ENCODE measurements at regions of chr14 and their contacts with region 1.

Region 1: GRCh38 chr14:20413045-20413799 is at the start of gene TEP1:
- DNase-seq: no peak
- ATAC-seq: peak; percentile 94
- H3K4me3 ChIP-seq: peak within 1 kb of the TSS; percentile 99
- H3K27ac ChIP-seq: peak within 1 kb of the TSS; percentile 94
- H3K4me1 ChIP-seq: peaks cover 4% of the 10 kb centered on the region
- H3K27me3 ChIP-seq: no peaks in the 10 kb centered on the region
- CTCF ChIP-seq: no peak
- EP300 ChIP-seq: no peak
- POLR2A ChIP-seq: peak; percentile 71
- RAD21 ChIP-seq: no peak
- polyA plus RNA-seq, gene TEP1: 3.3 to 6.4 TPM

Region 2: DNA sequence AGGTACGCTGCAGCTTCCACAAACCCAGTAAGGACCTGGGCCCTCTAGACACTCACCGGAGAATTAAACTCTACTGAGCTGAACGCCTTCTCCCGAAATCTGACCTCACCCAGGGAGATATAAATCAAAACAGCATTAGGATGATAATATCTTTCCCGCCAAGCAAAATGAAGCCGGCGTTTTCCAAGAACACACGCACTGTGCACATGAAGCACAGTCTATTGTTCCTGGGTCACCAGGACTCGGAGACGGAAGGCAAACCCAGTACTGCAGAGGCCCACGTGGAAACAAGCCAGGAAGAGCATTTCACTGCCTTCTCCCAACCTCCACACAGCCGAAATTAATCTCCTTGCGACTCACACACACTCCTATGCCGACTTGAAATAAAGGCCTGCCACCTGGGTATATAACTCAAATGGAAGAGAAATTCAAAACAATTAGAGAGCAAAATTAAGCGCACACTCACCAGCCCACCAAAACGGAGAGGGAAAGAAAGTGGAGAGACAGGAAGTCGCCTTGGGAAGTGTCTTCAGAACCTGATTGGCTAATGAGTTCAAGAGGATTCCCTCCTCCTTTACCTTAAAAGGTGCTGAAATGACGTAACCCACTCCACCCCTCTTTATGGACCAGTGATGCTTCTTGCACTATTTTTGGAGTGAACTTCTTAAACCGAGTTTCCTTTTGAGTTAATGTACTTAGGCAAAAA is 80.3 kb before region 1 on chr14 and contains the start of gene CCNB1IP1:
- CTCF ChIA-PET with region 1: interaction called, 91 read pairs
- POLR2A ChIA-PET with region 1: interaction called, 8 read pairs
- RAD21 ChIA-PET with region 1: interaction called, 78 read pairs
- SMC1A ChIA-PET with region 1: interaction called, 56 read pairs
- in situ Hi-C with region 1: no loop called
- intact Hi-C with region 1: no loop called
- DNase-seq: peak; percentile 87
- ATAC-seq: peak; percentile 95
- H3K4me3 ChIP-seq: peak within 1 kb of the TSS; percentile 82
- H3K27ac ChIP-seq: peak within 1 kb of the TSS; percentile 85
- H3K4me1 ChIP-seq: peaks cover 6% of the 10 kb centered on the region; the same call in 1 of the 2 replicates
- H3K27me3 ChIP-seq: no peaks in the 10 kb centered on the region
- CTCF ChIP-seq: no peak
- EP300 ChIP-seq: no peak; a peak in 1 of 4 replicates
- POLR2A ChIP-seq: peak; percentile 56; the same call in 1 of the 2 replicates
- RAD21 ChIP-seq: no peak
- polyA plus RNA-seq, gene CCNB1IP1: 69.2 to 80.6 TPM

Region 3: GRCh38 chr14:20427231-20428009 is 14.2 kb after region 1 on chr14:
- CTCF ChIA-PET with region 1: interaction called, 70 read pairs
- POLR2A ChIA-PET with region 1: interaction called, 6 read pairs
- RAD21 ChIA-PET with region 1: interaction called, 5 read pairs
- SMC1A ChIA-PET with region 1: interaction called, 18 read pairs
- in situ Hi-C with region 1: no loop called
- intact Hi-C with region 1: loop called (anchors 1 kb)
- DNase-seq: peak; percentile 71
- ATAC-seq: peak; percentile 85
- H3K4me3 ChIP-seq: peak overlapping the region; percentile 50; the same call in 1 of the 2 replicates
- H3K27ac ChIP-seq: peak overlapping the region; percentile 89
- H3K4me1 ChIP-seq: peaks cover 18% of the 10 kb centered on the region
- H3K27me3 ChIP-seq: no peaks in the 10 kb centered on the region
- CTCF ChIP-seq: no peak
- EP300 ChIP-seq: peak; percentile 42 to 74; a peak in 2 of 4 replicates
- POLR2A ChIP-seq: no peak
- RAD21 ChIP-seq: no peak

Region 4: GRCh38 chr14:20461274-20462001 is 48.2 kb after region 1 on chr14 and contains the start of gene PIP4P1:
- CTCF ChIA-PET with region 1: interaction called, 48 read pairs
- POLR2A ChIA-PET with region 1: interaction called, 27 read pairs
- RAD21 ChIA-PET with region 1: interaction called, 20 read pairs
- SMC1A ChIA-PET with region 1: interaction called, 27 read pairs
- in situ Hi-C with region 1: no loop called
- intact Hi-C with region 1: no loop called
- DNase-seq: peak; percentile 100
- ATAC-seq: peak; percentile 96
- H3K4me3 ChIP-seq: peak within 1 kb of the TSS; percentile 73
- H3K27ac ChIP-seq: peak within 1 kb of the TSS; percentile 87
- H3K4me1 ChIP-seq: peaks cover 6% of the 10 kb centered on the region
- H3K27me3 ChIP-seq: no peaks in the 10 kb centered on the region
- CTCF ChIP-seq: no peak
- EP300 ChIP-seq: no peak
- POLR2A ChIP-seq: peak; percentile 78
- RAD21 ChIP-seq: no peak
- polyA plus RNA-seq, gene PIP4P1: 19.1 to 41.6 TPM

Region 5: DNA sequence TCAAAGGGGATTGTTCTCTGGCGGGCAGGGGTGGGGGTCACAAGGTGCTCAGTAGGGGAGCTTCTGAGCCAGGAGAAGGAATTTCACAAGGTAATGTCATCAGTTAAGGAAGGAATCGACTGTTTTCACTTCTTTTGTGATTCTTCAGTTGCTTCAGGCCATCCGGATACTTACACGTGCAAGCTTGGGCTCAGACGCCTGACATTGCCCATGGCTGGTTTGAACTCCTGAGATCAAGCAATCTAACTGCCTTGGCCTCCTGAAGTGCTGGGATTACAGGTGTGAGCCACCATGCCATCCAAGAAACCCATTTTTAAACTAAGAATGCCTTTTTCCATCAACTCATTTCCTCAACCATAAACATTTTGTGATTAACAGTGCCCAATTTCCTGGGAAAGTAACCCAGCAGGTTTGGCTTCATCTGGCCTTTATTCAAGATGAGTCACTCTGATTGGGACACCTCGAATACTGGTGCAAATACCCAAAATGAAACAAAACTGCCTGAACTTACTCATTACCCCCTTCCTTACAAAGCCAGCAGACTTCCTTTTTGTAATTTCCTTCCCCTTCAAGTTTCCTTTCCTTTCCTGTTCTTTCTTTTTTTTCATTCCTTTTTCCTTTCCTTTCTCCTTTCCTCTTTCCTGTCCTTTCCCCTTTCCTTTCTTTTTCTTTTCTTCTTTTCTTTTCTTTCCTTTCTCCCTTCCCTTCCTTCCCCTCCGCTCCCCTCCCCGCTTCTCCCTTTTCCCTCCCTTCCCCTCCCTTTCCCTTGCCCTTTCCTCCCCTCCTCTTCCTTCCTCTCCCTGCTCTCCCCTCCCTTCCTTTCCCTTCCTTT is 81.9 kb after region 1 on chr14:
- CTCF ChIA-PET with region 1: interaction called, 20 read pairs
- POLR2A ChIA-PET with region 1: interaction called, 4 read pairs
- RAD21 ChIA-PET with region 1: interaction called, 9 read pairs
- SMC1A ChIA-PET with region 1: interaction called, 15 read pairs
- in situ Hi-C with region 1: no loop called
- intact Hi-C with region 1: loop called (anchors 1 kb)
- DNase-seq: no peak
- ATAC-seq: no peak
- H3K4me3 ChIP-seq: no peak overlapping the region
- H3K27ac ChIP-seq: no peak overlapping the region
- H3K4me1 ChIP-seq: peaks cover 36% of the 10 kb centered on the region
- H3K27me3 ChIP-seq: no peaks in the 10 kb centered on the region
- CTCF ChIP-seq: no peak
- EP300 ChIP-seq: no peak
- POLR2A ChIP-seq: no peak
- RAD21 ChIP-seq: no peak

Region 6: GRCh38 chr14:20606190-20606901 is 193.1 kb after region 1 on chr14:
- CTCF ChIA-PET with region 1: interaction called, 86 read pairs
- POLR2A ChIA-PET with region 1: no interaction called
- RAD21 ChIA-PET with region 1: interaction called, 36 read pairs
- SMC1A ChIA-PET with region 1: interaction called, 47 read pairs
- in situ Hi-C with region 1: loop called (anchors 5 kb)
- intact Hi-C with region 1: loop called (anchors 1 kb)
- DNase-seq: no peak
- ATAC-seq: no peak
- H3K4me3 ChIP-seq: no peak overlapping the region
- H3K27ac ChIP-seq: no peak overlapping the region
- H3K4me1 ChIP-seq: peaks cover 15% of the 10 kb centered on the region
- H3K27me3 ChIP-seq: no peaks in the 10 kb centered on the region
- CTCF ChIP-seq: peak; percentile 46 to 58 (median 47); a peak in 4 of 6 replicates
- EP300 ChIP-seq: no peak
- POLR2A ChIP-seq: no peak
- RAD21 ChIP-seq: peak; percentile 65

Region 7: GRCh38 chr14:20690848-20691523 is 277.8 kb after region 1 on chr14:
- CTCF ChIA-PET with region 1: interaction called, 14 read pairs
- POLR2A ChIA-PET with region 1: no interaction called
- RAD21 ChIA-PET with region 1: interaction called, 11 read pairs
- SMC1A ChIA-PET with region 1: interaction called, 3 read pairs
- in situ Hi-C with region 1: no loop called
- intact Hi-C with region 1: no loop called
- DNase-seq: peak; percentile 44
- ATAC-seq: peak; percentile 95
- H3K4me3 ChIP-seq: no peak overlapping the region
- H3K27ac ChIP-seq: no peak overlapping the region
- H3K4me1 ChIP-seq: no peaks in the 10 kb centered on the region
- H3K27me3 ChIP-seq: no peaks in the 10 kb centered on the region
- CTCF ChIP-seq: peak; percentile 80 to 94 (median 82)
- EP300 ChIP-seq: no peak
- POLR2A ChIP-seq: no peak
- RAD21 ChIP-seq: peak; percentile 94

Region 8: DNA sequence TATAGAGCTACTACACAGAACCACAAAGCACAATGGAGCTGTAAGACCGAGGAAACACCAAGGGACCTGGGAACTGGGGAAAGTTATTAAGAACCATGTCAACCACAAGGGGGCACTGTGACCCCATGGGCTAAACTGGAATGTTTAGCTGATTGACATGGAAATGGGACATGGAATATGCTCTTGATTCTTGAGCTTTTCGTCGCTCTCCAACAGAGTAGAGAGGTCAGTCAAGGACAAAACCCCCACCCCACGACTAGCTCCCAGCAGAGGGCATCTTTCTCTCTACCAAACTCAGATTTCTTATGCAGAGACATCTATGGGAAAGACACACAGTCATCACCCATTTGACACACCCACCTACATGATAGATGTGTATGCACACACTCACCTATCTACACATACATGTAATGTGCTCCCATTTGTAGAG is 601.6 kb after region 1 on chr14:
- CTCF ChIA-PET with region 1: no interaction called
- POLR2A ChIA-PET with region 1: no interaction called
- RAD21 ChIA-PET with region 1: no interaction called
- SMC1A ChIA-PET with region 1: no interaction called
- in situ Hi-C with region 1: no loop called
- intact Hi-C with region 1: no loop called
- DNase-seq: peak; percentile 25
- ATAC-seq: peak; percentile 91
- H3K4me3 ChIP-seq: no peak overlapping the region
- H3K27ac ChIP-seq: no peak overlapping the region
- H3K4me1 ChIP-seq: no peaks in the 10 kb centered on the region
- H3K27me3 ChIP-seq: peaks cover 0 to 5% of the 10 kb centered on the region in 2 experiments; a peak in 2 of 4 replicates
- CTCF ChIP-seq: peak; percentile 79 to 93 (median 88); a peak in 5 of 6 replicates
- EP300 ChIP-seq: no peak
- POLR2A ChIP-seq: no peak
- RAD21 ChIP-seq: peak; percentile 94

Measured in GM12878 (cell line).